Activated T-helper 2 cell treated with anti-CD3 and anti-CD28 coated beads, Interferon-gamma antibody, Interleukin-2, Interleukin-4, amounts not matched to agents 10 μg/mL and 5 μg/mL and 100 μg/mL, durations not matched to agents 14 hours and 24 hours and 36 hours (primary cell): ENCODE measurements at regions of chr15 and their contacts with region 1.

Region 1: GRCh38 chr15:68304589-68305337 is 27.2 kb downstream of the FEM1B start:
- DNase-seq: peak; percentile 4
- H3K4me3 Mint-ChIP-seq: no peak overlapping the region
- H3K27ac Mint-ChIP-seq: peak overlapping the region; percentile 2
- H3K4me1 Mint-ChIP-seq: peaks cover 20% of the 10 kb centered on the region
- H3K27me3 Mint-ChIP-seq: peaks cover 2% of the 10 kb centered on the region

Region 2: GRCh38 chr15:68252925-68253534 is 51.7 kb before region 1 on chr15:
- intact Hi-C with region 1: loop called (anchors 1 kb)
- DNase-seq: no peak
- H3K4me3 Mint-ChIP-seq: no peak overlapping the region
- H3K27ac Mint-ChIP-seq: no peak overlapping the region
- H3K4me1 Mint-ChIP-seq: peaks cover 2% of the 10 kb centered on the region
- H3K27me3 Mint-ChIP-seq: peaks cover 19% of the 10 kb centered on the region

Region 3: DNA sequence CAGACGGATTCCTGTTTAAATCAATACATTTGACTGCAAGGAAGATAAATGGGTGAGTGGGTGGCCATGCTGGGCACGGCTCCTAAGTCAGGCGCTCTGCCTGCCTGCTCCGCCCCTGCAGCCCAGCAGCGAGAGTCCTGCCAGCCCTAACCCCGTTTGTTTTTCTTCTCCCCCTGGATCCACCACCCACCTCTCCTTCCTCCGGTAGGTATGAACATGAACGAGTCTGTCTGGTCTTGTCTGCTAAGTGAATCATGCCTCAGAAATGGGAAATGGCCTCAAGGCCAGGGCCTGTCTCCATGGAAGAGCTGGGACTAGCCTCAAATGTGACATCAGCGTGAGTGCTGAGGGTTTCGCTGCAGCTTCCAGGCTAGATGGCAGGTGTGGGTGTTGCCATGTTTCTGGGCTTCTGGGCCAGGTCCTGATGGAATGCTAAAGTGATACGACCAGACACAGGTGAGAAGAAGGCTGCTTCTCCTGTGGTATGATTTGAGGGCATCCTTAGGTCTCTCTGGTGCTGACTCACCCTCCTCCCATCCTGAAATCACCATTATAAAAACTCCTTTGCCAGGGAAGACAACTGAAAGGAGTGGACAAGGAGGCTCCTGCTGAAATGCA is 32.8 kb before region 1 on chr15:
- intact Hi-C with region 1: no loop called
- DNase-seq: no peak
- H3K4me3 Mint-ChIP-seq: no peak overlapping the region
- H3K27ac Mint-ChIP-seq: no peak overlapping the region
- H3K4me1 Mint-ChIP-seq: peaks cover 25% of the 10 kb centered on the region
- H3K27me3 Mint-ChIP-seq: peaks cover 22% of the 10 kb centered on the region

Region 4: DNA sequence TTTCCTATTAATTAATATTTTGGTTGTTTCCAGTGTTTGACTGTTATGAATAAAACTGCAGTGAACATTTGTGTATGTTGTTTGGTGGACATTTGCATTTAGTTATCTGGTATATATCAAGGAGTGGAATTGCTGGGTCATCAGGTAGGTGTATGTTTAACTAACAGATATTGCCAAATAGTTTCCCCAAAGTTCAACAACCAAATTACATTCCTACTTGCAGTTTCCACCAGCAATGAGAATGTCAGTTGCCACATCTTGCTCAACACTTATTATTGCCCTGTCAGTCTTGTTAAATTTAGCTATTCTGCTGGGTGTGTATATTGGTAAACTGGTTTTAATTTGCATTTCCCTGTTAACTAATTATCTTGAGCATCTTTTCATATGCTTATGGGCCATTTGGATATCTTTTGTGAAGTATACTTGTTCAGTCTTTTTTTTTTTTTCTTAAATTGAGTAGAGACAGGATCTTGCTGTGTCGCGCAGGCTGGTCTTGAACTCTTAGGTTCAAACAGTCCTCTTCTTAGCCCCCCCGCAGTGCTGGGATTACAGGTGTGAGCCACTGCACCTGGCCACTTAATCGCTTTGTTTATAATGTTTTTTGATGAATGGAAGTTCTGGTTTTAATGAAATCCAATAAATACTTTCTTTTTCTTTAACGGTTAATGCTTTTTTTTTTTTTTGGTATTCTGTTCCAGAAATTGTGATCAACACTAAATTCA is 19.3 kb before region 1 on chr15:
- intact Hi-C with region 1: no loop called
- DNase-seq: no peak
- H3K4me3 Mint-ChIP-seq: no peak overlapping the region
- H3K27ac Mint-ChIP-seq: no peak overlapping the region
- H3K4me1 Mint-ChIP-seq: peaks cover 45% of the 10 kb centered on the region
- H3K27me3 Mint-ChIP-seq: no peaks in the 10 kb centered on the region

Region 5: GRCh38 chr15:68383161-68384074 is 78.7 kb after region 1 on chr15:
- intact Hi-C with region 1: loop called (anchors 1 kb)
- DNase-seq: no peak
- H3K4me3 Mint-ChIP-seq: no peak overlapping the region
- H3K27ac Mint-ChIP-seq: no peak overlapping the region
- H3K4me1 Mint-ChIP-seq: peaks cover 14% of the 10 kb centered on the region
- H3K27me3 Mint-ChIP-seq: no peaks in the 10 kb centered on the region

Region 6: DNA sequence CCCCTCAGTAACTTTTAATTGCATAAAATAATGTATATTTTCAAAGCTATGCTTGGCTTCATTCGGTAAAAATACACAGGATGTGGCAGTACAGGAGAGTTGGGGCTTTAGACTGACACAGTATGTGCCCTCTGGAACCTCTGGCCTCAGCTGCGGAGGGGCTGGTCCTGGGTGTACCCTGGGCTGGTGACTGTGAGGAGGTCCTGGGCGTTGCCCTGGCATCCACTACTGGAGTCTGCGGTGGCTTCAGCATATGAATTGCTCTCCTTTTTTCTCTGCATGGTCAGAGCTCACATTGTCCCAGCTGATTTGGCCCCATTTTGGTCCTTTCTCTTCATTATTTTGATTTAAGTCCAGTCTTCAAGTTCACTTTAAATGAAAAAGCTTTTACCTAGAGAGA is 233.5 kb after region 1 on chr15:
- intact Hi-C with region 1: loop called (anchors 2 kb)
- DNase-seq: no peak
- H3K4me3 Mint-ChIP-seq: no peak overlapping the region
- H3K27ac Mint-ChIP-seq: no peak overlapping the region
- H3K4me1 Mint-ChIP-seq: no peaks in the 10 kb centered on the region
- H3K27me3 Mint-ChIP-seq: peaks cover 20% of the 10 kb centered on the region